ENCODE measurements at regions of chr11 and their contacts with region 1.

Region 1: GRCh38 chr11:124732230-124732629 is 7.5 kb upstream of the NRGN start:
- DNase-seq: no peak
- H3K4me3 ChIP-seq: no peak overlapping the region
- H3K27me3 ChIP-seq: peaks cover 10% of the 10 kb centered on the region
- CTCF ChIP-seq: no peak

Region 2: DNA sequence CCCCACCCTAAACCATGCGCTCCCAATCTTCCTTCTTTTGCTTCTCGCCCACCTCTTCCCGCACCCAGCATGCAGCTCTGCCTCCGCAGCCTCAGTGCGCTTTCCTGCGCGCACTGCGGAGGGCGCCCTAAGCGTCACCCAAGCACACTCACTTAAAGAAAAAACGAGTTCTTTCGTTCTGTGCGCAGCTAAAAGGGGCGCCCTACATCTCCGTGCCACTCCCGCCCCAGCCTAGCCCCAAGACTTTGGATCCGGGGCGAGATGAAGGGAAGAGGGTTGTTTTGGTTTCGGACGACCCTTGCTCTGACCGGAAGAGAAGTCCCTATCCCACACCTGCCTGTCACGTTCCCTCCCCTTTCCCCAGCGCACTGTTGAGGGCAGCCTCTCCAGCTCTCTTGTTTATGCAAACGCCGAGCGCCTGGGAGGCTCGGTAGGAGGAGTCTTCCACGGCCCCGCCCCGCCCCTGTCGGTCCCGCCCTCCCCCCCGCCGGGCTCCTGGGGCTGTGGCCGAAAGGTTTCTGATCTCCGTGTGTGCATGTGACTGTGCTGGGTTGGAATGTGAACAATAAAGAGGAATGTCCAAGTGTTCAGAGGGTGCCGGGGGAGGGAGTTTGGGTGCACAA is 14.5 kb after region 1 on chr11:
- CTCF ChIA-PET with region 1: interaction called, 17 read pairs
- POLR2A ChIA-PET with region 1: no interaction called
- DNase-seq: no peak
- H3K4me3 ChIP-seq: peak overlapping the region; percentile 56
- H3K27me3 ChIP-seq: peaks cover 19% of the 10 kb centered on the region
- CTCF ChIP-seq: peak; percentile 76